ENCODE measurements at regions of chr10 and their contacts with region 1.

Region 1: DNA sequence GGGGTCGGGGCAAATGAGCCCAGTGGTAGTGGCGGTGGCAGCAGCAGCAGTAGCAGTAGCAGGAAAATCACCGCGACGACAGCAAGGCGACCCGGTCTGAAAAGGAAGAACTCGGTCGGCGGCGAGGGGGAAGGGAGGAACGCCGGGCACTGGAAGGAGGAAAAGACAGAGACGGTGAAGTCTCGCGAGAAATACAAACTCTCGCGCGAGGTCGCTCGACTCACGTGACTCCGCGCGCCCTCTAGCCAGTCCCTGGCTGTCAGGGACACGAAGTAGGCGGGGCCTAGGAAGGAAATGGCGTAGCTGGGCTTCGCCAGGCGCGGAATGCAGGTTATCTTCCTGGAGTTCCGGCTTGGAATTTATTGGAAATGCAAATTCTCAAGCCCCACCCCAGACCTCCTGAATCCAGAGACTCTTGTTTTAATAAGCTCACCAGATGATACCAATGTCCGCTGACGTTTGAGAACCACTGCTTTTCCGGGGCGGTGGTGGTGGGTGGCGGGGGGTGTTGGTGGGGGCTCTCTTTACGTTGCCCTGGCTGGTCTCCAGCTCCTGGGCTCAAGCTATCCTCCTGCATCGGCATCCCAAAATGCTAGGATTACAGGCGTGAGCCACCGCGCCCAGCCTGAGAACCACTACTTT is at the start of gene SMNDC1:
- DNase-seq: peak; percentile 97 to 98 (median 98)
- ATAC-seq: peak; percentile 95 to 97 (median 96)
- H3K4me3 ChIP-seq: peak within 1 kb of the TSS; percentile 72 to 93 (median 86)
- H3K27ac ChIP-seq: peak within 1 kb of the TSS; percentile 81 to 96 (median 92)
- H3K4me1 ChIP-seq: peaks cover 0 to 55% (median 41%) of the 10 kb centered on the region in 12 donors
- H3K27me3 ChIP-seq: no peaks in the 10 kb centered on the region
- CTCF ChIP-seq: no peak
- POLR2A ChIP-seq: peak in 1 of 2 donors; percentile 72
- total RNA-seq, gene SMNDC1: 5.2 to 23.1 (median 20.7) TPM

Region 2: GRCh38 chr10:110512461-110513187 is 207.7 kb after region 1 on chr10:
- intact Hi-C with region 1: no loop called
- DNase-seq: no peak
- ATAC-seq: peak in 3 of 4 donors; percentile 16 to 51 (median 26)
- H3K4me3 ChIP-seq: no peak overlapping the region
- H3K27ac ChIP-seq: peak overlapping the region in 4 of 12 donors; percentile 19 to 62 (median 24)
- H3K4me1 ChIP-seq: peaks cover 5 to 50% (median 25%) of the 10 kb centered on the region in 12 donors
- H3K27me3 ChIP-seq: no peaks in the 10 kb centered on the region
- CTCF ChIP-seq: no peak
- POLR2A ChIP-seq: no peak

Region 3: GRCh38 chr10:110530131-110530831 is 225.4 kb after region 1 on chr10:
- intact Hi-C with region 1: loop called in 2 of 10 experiments (anchors 5 kb)
- DNase-seq: peak; percentile 44 to 74 (median 63)
- ATAC-seq: peak; percentile 58 to 89 (median 88)
- H3K4me3 ChIP-seq: peak overlapping the region in 10 of 12 donors; percentile 3 to 49 (median 32)
- H3K27ac ChIP-seq: no peak overlapping the region
- H3K4me1 ChIP-seq: peaks cover 0 to 44% (median 5%) of the 10 kb centered on the region in 12 donors
- H3K27me3 ChIP-seq: peaks cover 0 to 4% (median 0%) of the 10 kb centered on the region in 9 donors
- CTCF ChIP-seq: no peak
- POLR2A ChIP-seq: no peak

Region 4: DNA sequence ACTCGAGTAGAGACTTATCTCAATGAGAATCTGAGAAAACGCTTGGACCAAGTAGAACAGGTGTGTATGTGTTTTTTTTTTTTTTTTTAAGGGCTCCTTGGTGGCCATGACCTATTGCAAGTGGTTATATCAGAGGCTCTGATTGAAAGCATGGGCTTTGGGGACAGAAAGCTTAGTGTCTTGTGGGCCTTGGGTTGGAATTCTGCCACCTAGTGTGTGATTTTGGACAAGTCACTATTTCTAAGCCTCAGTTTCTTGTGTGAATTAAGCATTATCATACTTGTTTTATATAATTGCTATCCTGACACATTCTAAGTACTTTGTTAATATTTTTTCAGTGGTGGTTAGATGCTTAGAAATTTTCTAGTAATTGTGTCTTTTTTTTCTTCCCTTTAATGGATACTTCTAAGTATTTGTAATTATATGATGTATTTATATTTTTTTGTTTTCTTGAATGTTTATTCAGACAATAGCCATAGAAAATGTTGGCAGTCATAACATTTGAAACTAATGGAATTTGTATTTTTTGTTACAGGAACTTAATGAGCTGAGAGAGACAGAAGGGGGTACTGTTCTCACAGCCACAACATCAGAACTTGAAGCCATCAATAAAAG is 295.7 kb after region 1 on chr10:
- intact Hi-C with region 1: loop called in 1 of 10 experiments (anchors 5 kb)
- DNase-seq: no peak
- ATAC-seq: peak in 1 of 4 donors; percentile 28
- H3K4me3 ChIP-seq: no peak overlapping the region
- H3K27ac ChIP-seq: no peak overlapping the region
- H3K4me1 ChIP-seq: no peaks in the 10 kb centered on the region
- H3K27me3 ChIP-seq: no peaks in the 10 kb centered on the region
- CTCF ChIP-seq: peak; percentile 11 to 55 (median 39)
- POLR2A ChIP-seq: no peak